K562 (cell line): ENCODE measurements at regions of chr21 and their contacts with region 1.

Region 1: GRCh38 chr21:31580866-31581276 is 78.6 kb upstream of the SOD1 start:
- DNase-seq: peak; percentile 65 to 79 (median 72)
- ATAC-seq: peak; percentile 98
- H3K4me3 ChIP-seq: no peak overlapping the region
- H3K27ac ChIP-seq: no peak overlapping the region
- H3K4me1 ChIP-seq: no peaks in the 10 kb centered on the region
- H3K27me3 ChIP-seq: peaks cover 11 to 12% of the 10 kb centered on the region in 2 experiments; a peak in 3 of 5 replicates
- CTCF ChIP-seq: peak; percentile 82 to 89 (median 87)
- EP300 ChIP-seq: no peak
- POLR2A ChIP-seq: no peak
- RAD21 ChIP-seq: peak; percentile 75 to 91

Region 2: DNA sequence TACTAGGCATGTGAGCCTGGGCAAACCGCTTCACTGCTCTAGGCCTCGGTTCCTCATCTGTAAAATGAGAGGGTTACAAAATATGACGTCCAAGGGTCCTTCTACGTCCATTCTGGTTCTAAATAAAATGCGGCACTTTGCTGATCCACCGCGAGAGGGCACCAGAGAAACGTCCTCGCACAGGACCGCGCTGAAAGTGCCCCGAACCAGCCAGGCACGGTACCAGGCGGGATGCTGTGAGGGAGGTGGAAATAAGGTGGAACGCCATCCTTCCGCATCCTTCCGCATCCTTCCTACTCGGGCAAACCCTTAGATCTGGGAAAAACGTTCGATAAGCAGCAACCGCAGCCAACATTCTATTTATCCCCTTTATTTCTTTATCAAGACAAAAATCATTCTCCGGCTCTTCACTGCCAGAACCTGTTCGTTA is 482.3 kb before region 1 on chr21:
- CTCF ChIA-PET with region 1: no interaction called
- POLR2A ChIA-PET with region 1: no interaction called
- in situ Hi-C with region 1: no loop called
- intact Hi-C with region 1: loop called (anchors 2 kb)
- DNase-seq: peak; percentile 54 to 71 (median 60)
- ATAC-seq: peak; percentile 96
- H3K4me3 ChIP-seq: no peak overlapping the region
- H3K27ac ChIP-seq: no peak overlapping the region
- H3K4me1 ChIP-seq: no peaks in the 10 kb centered on the region
- H3K27me3 ChIP-seq: no peaks in the 10 kb centered on the region
- CTCF ChIP-seq: peak; percentile 82 to 92 (median 88)
- EP300 ChIP-seq: no peak
- POLR2A ChIP-seq: no peak
- RAD21 ChIP-seq: peak; percentile 58 to 82

Region 3: DNA sequence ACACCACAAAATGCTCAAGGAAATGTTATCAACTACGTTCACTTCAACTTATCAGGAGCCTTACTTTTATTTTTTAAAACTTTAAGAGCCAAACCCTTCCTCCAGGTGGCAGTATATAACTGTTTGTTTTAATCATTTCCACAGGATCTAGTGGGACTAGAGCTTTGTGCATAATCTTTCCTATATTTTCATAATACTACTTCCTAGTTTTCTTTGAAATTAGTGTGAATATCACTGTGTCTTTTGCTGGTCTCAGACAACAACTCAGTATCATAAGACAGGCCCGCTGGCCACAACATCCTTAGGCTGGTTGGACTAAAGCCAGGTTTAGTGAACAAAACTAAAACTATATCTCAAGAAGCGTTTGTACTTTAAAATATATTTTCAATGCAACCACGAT is 382.3 kb before region 1 on chr21:
- CTCF ChIA-PET with region 1: interaction called, 19 read pairs
- POLR2A ChIA-PET with region 1: interaction called, 4 read pairs
- in situ Hi-C with region 1: no loop called
- intact Hi-C with region 1: loop called (anchors 1 kb)
- DNase-seq: peak; percentile 43 to 63 (median 49)
- ATAC-seq: peak; percentile 84
- H3K4me3 ChIP-seq: no peak overlapping the region
- H3K27ac ChIP-seq: no peak overlapping the region
- H3K4me1 ChIP-seq: no peaks in the 10 kb centered on the region
- H3K27me3 ChIP-seq: peaks cover 5% of the 10 kb centered on the region in 2 experiments; a peak in 3 of 5 replicates
- CTCF ChIP-seq: peak in 2 of 3 experiments; percentile 60 to 85; a peak in 4 of 6 replicates
- EP300 ChIP-seq: no peak
- POLR2A ChIP-seq: no peak
- RAD21 ChIP-seq: peak; percentile 73 to 90

Region 4: GRCh38 chr21:31343680-31344480 is 237.0 kb before region 1 on chr21 and contains the start of gene TIAM1:
- CTCF ChIA-PET with region 1: no interaction called
- POLR2A ChIA-PET with region 1: no interaction called
- in situ Hi-C with region 1: no loop called
- intact Hi-C with region 1: loop called (anchors 10 kb)
- DNase-seq: no peak
- ATAC-seq: no peak
- H3K4me3 ChIP-seq: no peak within 1 kb of the TSS
- H3K27ac ChIP-seq: no peak within 1 kb of the TSS
- H3K4me1 ChIP-seq: 0 out of 5 replicates have a peak, but pooled peaks cover 0 to 3% of the 10 kb centered on the region in 2 experiments
- H3K27me3 ChIP-seq: peaks cover 18 to 23% of the 10 kb centered on the region in 2 experiments; a peak in 4 of 5 replicates
- CTCF ChIP-seq: no peak
- EP300 ChIP-seq: no peak
- POLR2A ChIP-seq: no peak
- RAD21 ChIP-seq: no peak
- polyA plus RNA-seq, gene TIAM1: not detected

Region 5: DNA sequence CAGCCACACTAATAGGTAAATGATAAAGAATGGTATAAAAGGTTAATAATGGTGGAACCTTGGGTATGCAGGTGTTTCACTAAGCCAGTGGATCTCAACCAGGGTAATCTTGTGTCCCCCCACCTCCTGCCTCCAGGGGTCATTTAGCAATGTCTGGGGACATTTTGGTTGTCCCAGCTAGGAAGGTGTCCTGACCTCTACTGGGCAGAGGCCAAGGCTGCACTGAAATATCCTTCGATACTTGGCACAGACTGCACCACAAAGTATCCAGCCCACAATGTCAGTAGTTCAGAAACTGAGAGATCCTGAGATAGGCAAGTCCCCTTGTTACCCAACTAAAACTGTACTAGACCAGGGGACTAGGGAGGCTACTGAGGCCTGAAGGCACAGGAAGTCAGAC is 123.2 kb before region 1 on chr21:
- CTCF ChIA-PET with region 1: interaction called, 3 read pairs
- POLR2A ChIA-PET with region 1: no interaction called
- in situ Hi-C with region 1: no loop called
- intact Hi-C with region 1: loop called (anchors 5 kb)
- DNase-seq: peak in 2 of 4 experiments; percentile 6 to 21
- ATAC-seq: peak; percentile 70
- H3K4me3 ChIP-seq: no peak overlapping the region
- H3K27ac ChIP-seq: no peak overlapping the region
- H3K4me1 ChIP-seq: no peaks in the 10 kb centered on the region
- H3K27me3 ChIP-seq: peaks cover 9 to 12% of the 10 kb centered on the region in 2 experiments; a peak in 3 of 5 replicates
- CTCF ChIP-seq: peak; percentile 40 to 80 (median 43)
- EP300 ChIP-seq: no peak
- POLR2A ChIP-seq: no peak
- RAD21 ChIP-seq: peak in 1 of 2 experiments; percentile 14; a peak in 1 of 4 replicates